Caco-2 (cell line): ENCODE measurements at regions of chr19 and their contacts with region 1.

Region 1: GRCh38 chr19:47790398-47790814 is 11.9 kb downstream of the SELENOW start:
- DNase-seq: peak; percentile 88 to 89
- H3K4me3 ChIP-seq: no peak overlapping the region
- H3K4me3 Mint-ChIP-seq: no peak overlapping the region
- H3K27ac Mint-ChIP-seq: no peak overlapping the region
- H3K4me1 ChIP-seq: no peaks in the 10 kb centered on the region
- H3K4me1 Mint-ChIP-seq: no peaks in the 10 kb centered on the region
- H3K27me3 ChIP-seq: no peaks in the 10 kb centered on the region
- H3K27me3 Mint-ChIP-seq: no peaks in the 10 kb centered on the region
- CTCF ChIP-seq: peak; percentile 85 to 88

Region 2: DNA sequence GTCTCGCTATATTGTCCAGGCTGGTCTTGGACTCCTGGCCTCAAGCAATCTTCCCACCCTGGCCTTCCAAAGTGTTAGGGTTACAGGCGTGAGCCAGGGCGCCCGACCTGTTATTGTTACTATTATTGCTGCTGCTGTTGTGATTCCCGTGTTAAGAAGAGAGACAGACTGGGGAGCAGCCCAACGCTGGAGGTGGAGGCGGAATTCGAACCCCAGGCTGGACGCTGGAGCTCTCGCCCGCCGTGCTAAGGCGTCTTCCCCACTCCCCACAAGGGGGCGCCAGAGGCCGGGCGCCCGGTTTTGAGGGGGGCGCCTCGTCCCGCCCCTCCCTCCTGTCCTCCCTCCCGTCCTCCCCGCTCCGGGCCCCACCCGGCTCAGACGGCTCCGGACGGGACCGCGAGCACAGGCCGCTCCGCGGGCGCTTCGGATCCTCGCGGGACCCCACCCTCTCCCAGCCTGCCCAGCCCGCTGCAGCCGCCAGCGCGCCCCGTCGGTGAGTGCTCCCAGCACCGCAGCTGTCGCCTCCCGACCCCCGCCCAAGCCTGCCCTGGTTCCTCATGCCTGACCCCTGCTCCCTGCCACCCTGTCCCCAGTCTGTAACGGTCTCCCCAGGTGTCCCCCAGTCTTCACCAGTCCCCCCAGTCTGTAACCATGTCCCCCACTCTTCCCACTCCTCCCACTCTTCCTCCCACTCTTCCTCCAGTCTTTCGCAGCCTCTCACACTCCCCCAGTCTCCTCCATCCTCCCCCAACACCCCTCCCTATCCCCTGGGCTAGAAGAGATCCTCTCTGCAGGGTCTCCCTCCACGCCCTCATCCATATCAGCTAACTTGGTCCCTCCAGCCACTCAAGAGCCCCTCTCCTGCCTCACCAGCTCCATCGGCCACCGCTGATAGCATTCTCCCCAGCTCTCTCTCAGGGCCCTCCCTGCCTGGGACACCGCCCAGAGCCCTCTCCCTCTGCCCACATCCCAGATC is 77.1 kb before region 1 on chr19 and contains the start of gene EHD2:
- CTCF ChIA-PET with region 1: no interaction called
- POLR2A ChIA-PET with region 1: interaction called, 3 read pairs
- intact Hi-C with region 1: loop called (anchors 2 kb)
- DNase-seq: peak in 1 of 2 experiments; percentile 74
- H3K4me3 ChIP-seq: peak within 1 kb of the TSS; percentile 33
- H3K4me3 Mint-ChIP-seq: peak within 1 kb of the TSS; percentile 77
- H3K27ac Mint-ChIP-seq: peak within 1 kb of the TSS; percentile 12
- H3K4me1 ChIP-seq: 0 out of 2 replicates have a peak, but pooled peaks cover 4% of the 10 kb centered on the region
- H3K4me1 Mint-ChIP-seq: peaks cover 10% of the 10 kb centered on the region
- H3K27me3 ChIP-seq: no peaks in the 10 kb centered on the region
- H3K27me3 Mint-ChIP-seq: no peaks in the 10 kb centered on the region
- CTCF ChIP-seq: peak; percentile 90 to 98
- total RNA-seq, gene EHD2: 13.3 and 14.6 TPM in 2 replicates

Region 3: DNA sequence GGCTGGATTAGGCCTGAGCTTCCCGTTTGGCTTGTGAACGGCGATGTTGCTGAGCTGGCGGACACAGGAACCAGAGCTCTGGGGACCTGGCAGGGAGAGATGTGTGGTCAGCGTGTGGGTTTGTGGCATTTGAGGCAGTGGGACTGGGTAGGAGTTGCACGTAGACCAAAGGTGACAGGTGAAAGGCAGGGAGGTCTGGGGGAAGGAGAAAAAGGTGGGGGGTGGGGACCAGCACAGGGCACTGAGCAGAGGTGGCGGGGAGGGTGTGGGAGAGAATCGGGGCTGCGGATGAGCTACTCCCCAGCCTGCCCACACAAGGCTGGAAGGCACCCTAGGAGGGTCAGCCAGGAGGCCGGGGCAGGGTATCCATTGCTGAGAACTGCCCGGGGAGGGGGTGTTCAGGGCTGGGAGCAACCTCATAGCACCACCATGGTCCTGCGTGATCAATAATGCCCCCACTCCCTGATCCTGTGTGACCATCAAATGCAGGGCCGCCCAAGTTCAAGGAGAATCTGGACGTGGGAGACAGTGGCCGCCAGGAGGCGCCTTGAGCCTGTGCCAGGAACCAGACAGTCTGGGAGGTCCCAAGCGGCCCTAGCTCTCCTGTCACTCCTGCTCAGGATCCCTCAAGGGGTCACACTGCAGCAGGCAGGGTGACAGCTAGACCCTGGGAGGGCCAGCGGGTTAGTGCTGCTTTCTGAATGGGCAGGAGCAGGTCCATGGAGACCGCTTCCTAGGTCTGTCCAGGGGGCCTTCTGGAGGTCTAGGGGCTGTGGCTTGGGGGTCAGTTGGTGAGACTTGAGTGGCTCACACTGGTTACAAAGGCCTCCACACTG is 24.7 kb before region 1 on chr19:
- CTCF ChIA-PET with region 1: interaction called, 20 read pairs
- POLR2A ChIA-PET with region 1: no interaction called
- intact Hi-C with region 1: loop called (anchors 1 kb)
- DNase-seq: peak; percentile 70 to 71
- H3K4me3 ChIP-seq: no peak overlapping the region
- H3K4me3 Mint-ChIP-seq: no peak overlapping the region
- H3K27ac Mint-ChIP-seq: no peak overlapping the region
- H3K4me1 ChIP-seq: no peaks in the 10 kb centered on the region; the same call in 1 of the 2 replicates
- H3K4me1 Mint-ChIP-seq: no peaks in the 10 kb centered on the region
- H3K27me3 ChIP-seq: no peaks in the 10 kb centered on the region
- H3K27me3 Mint-ChIP-seq: peaks cover 2% of the 10 kb centered on the region
- CTCF ChIP-seq: peak; percentile 83 to 88

Region 4: DNA sequence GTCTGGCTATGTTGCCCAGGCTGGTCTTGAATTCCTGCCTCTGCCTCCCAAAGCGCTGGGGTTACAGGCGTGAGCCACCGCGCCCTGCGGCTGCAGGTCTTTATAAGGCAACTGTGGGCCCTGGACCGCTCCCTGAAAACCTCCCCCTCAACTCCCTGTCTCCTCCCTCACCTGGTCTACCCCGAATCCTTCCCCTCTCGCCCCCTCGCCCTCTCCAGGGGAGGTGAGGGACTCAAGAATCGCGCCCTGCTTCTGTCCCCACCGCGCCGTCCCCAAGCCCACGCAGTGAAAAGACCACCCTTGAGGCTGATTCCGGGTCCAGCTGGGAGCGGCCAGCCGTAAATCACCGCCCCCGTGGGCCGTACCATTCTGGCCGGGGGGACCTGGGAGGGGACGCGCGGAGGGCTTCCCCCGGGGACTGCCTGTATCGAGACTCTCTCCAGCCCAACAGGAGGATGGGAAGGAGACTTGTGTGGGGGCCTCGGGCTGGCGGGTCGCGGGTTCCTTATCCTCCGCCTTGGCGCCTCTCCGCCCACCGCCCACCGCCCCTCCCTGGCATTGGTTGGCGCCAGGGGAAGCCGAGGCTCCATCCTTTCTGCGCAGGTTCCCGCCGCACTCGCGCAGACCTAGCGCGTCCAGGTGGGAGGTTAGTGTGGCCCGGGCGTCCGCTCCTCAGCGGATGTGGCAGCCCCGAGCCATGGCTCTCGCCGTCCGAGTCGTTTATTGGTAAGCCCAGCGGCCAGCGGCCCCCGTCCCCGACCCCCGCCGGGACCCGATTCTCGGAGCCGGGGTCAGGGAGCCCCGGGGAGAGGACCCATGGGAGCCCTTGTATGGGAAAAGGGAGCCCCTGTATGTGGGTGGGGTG is 12.1 kb before region 1 on chr19 and contains the start of gene SELENOW:
- CTCF ChIA-PET with region 1: no interaction called
- POLR2A ChIA-PET with region 1: no interaction called
- intact Hi-C with region 1: no loop called
- DNase-seq: peak; percentile 85 to 88
- H3K4me3 ChIP-seq: peak within 1 kb of the TSS; percentile 97
- H3K4me3 Mint-ChIP-seq: peak within 1 kb of the TSS; percentile 91
- H3K27ac Mint-ChIP-seq: peak within 1 kb of the TSS; percentile 93
- H3K4me1 ChIP-seq: peaks cover 14% of the 10 kb centered on the region
- H3K4me1 Mint-ChIP-seq: peaks cover 20% of the 10 kb centered on the region
- H3K27me3 ChIP-seq: no peaks in the 10 kb centered on the region
- H3K27me3 Mint-ChIP-seq: no peaks in the 10 kb centered on the region
- CTCF ChIP-seq: no peak
- total RNA-seq, gene SELENOW: 110 and 119 TPM in 2 replicates